ENCODE measurements at regions of chr22 and their contacts with region 1.

Region 1: GRCh38 chr22:46071451-46072109 is 78.7 kb upstream of the PPARA start:
- DNase-seq: peak; percentile 44
- H3K4me3 ChIP-seq: peak overlapping the region; percentile 66
- H3K27ac ChIP-seq: no peak overlapping the region
- H3K4me1 ChIP-seq: peaks cover 38% of the 10 kb centered on the region
- CTCF ChIP-seq: no peak

Region 2: DNA sequence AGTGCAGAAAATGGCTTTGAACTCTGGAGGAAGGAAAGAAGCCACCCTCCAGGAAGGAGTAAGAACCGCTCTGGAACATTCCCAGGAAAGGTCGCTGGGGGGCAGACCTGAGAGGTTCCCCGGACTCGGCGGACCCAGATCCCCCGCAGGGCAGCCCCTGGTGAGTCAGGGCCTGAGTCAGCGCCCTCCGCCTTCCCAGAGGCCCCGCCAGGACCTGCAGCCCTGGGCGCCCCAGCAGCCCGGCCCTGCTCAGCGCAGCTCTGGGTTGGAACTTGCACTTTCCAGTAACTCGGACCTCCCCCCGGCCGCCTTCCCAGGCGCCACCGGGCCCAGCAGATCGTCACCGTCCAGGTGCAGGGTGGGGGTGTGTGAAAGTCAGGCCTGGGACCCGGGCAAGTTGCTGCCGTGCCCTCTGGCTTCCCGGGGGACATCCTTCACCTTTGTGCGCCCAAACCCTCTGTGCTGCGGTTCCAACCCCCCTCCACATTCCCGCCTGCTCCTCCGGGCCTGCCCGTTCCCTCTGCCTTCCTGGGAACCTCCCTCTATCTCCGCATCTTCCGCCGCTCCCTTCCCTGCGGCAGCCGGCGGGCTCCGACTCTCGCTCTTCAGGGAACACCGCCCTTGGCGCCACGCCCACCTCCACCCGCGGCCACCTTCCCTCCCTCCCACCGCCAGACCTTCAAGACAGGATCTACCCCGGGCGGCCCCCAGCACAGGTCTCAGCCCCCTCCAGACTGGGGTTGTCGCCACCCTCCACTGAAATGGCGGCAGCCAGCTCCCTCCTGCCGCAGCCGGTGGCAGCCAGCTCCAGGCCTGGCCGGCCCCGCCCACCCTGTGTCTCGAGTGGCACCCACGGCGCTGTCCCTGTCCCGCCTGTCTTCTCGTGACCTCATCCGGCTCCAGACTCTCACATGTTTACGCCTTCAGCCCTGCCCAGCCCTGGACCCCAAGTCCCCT is 57.8 kb before region 1 on chr22:
- CTCF ChIA-PET with region 1: no interaction called
- POLR2A ChIA-PET with region 1: interaction called, 3 read pairs
- intact Hi-C with region 1: loop called (anchors 10 kb)
- DNase-seq: peak; percentile 85
- H3K4me3 ChIP-seq: peak overlapping the region; percentile 68
- H3K27ac ChIP-seq: no peak overlapping the region
- H3K4me1 ChIP-seq: peaks cover 14% of the 10 kb centered on the region
- CTCF ChIP-seq: peak; percentile 84

Measured in OCI-LY7 (cell line).